ENCODE measurements at regions of chr17 and their contacts with region 1.

Region 1: GRCh38 chr17:59829217-59830006 is 63.3 kb downstream of the TUBD1 start:
- DNase-seq: no peak
- ATAC-seq: peak; percentile 70
- H3K4me3 ChIP-seq: no peak overlapping the region
- H3K27ac ChIP-seq: peak overlapping the region in 1 of 2 donors; percentile 80
- H3K4me1 ChIP-seq: peaks cover 4 to 5% of the 10 kb centered on the region in 2 donors
- H3K27me3 ChIP-seq: no peaks in the 10 kb centered on the region

Region 2: GRCh38 chr17:59786536-59787319 is 42.7 kb before region 1 on chr17:
- intact Hi-C with region 1: loop called (anchors 5 kb)
- DNase-seq: peak in 1 of 2 donors; percentile 61
- ATAC-seq: peak; percentile 87
- H3K4me3 ChIP-seq: peak overlapping the region in 1 of 2 donors; percentile 28
- H3K27ac ChIP-seq: peak overlapping the region; percentile 92 to 96
- H3K4me1 ChIP-seq: peaks cover 0 to 2% of the 10 kb centered on the region in 2 donors
- H3K27me3 ChIP-seq: no peaks in the 10 kb centered on the region

Region 3: GRCh38 chr17:59892924-59893676 is 63.7 kb after region 1 on chr17 and contains the starts of genes RPS6KB1 and TUBD1:
- intact Hi-C with region 1: no loop called
- DNase-seq: peak; percentile 97 to 98
- ATAC-seq: peak; percentile 100
- H3K4me3 ChIP-seq: peak within 1 kb of the TSS; percentile 90 to 91
- H3K27ac ChIP-seq: peak within 1 kb of the TSS; percentile 2 to 64
- H3K4me1 ChIP-seq: peaks cover 0 to 3% of the 10 kb centered on the region in 2 donors
- H3K27me3 ChIP-seq: peaks cover 0 to 1% of the 10 kb centered on the region in 2 donors
- total RNA-seq, gene RPS6KB1: 40.9 to 51.0 TPM
- total RNA-seq, gene TUBD1: 9.4 to 12.0 TPM

Measured in aorta (tissue), 5 donors.